Dorsolateral prefrontal cortex (tissue), 120 donors: ENCODE measurements at regions of chr14 and their contacts with region 1.

Region 1: DNA sequence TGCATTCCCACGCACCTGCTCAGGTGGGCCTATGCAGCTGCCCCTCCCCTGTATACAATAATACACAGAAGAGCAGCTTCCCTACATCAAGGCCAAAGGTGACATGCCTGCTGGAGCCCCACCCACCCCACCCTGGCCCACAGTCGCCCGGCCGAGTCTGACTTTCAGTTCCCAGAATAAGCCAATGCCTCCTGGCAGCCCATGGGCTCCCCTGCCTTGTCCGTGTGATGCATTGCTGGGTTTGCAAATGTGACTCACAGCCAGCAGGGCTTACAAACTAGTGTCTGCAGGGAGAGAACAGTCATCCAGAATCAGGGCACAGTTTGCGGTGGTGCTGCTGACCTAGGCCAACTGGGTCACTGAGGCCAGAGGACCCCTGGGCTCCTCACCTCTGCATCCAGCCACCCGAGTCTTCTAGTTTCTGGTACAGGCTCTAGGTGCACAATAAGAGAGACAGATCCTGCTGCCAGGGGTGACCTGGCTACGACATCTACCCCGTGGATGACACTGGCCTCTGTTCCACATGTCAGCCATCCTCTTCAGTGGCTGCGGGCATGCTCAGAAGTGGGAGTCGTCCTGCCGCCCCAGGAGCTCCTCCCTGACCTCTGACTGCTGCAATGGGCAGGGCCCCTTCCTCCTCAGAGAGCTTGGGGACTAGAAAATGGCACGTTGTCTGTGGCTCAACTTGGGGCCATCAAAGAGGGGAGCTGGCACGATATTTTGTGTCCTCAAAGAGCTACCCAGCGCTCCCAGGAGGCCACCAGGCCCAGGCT is 84.5 kb downstream of the CHGA start:
- DNase-seq: peak in 5 of 10 donors; percentile 54 to 78 (median 70)
- H3K4me3 ChIP-seq: no peak overlapping the region
- H3K27ac ChIP-seq: peak overlapping the region; percentile 36 to 98 (median 89)
- H3K27me3 ChIP-seq: no peaks in the 10 kb centered on the region
- CTCF ChIP-seq: no peak

Region 2: DNA sequence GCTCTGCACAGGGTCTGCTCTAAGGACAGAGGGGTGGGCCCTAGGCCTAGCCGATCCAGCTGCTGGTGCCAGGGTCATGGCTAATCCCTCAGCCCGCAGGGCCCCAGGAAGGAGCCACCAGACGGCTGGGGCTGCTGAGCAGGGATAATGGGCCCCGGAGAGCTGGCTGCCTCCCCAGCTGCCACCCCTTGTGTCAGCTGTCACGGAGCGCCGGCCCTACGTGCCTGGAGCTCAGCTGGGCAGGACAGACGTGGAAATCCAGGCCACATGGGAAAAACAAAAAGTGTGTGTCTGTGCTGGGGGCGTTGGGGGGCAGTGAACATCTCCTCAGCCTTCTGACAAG is 48.3 kb before region 1 on chr14:
- intact Hi-C with region 1: loop called (anchors 1 to 5 kb)
- DNase-seq: peak in 9 of 10 donors; percentile 64 to 83 (median 78)
- H3K4me3 ChIP-seq: peak overlapping the region in 6 of 59 donors; percentile 1 to 25 (median 4)
- H3K27ac ChIP-seq: peak overlapping the region; percentile 79 to 99 (median 95)
- H3K27me3 ChIP-seq: no peaks in the 10 kb centered on the region
- CTCF ChIP-seq: peak in 4 of 56 donors; percentile 5 to 21 (median 12)

Region 3: GRCh38 chr14:92973261-92973797 is 34.1 kb before region 1 on chr14:
- intact Hi-C with region 1: loop called (anchors 2 kb)
- DNase-seq: peak; percentile 50 to 91 (median 86)
- H3K4me3 ChIP-seq: no peak overlapping the region
- H3K27ac ChIP-seq: peak overlapping the region; percentile 24 to 92 (median 85)
- H3K27me3 ChIP-seq: no peaks in the 10 kb centered on the region
- CTCF ChIP-seq: peak; percentile 67 to 95 (median 85)

Region 4: GRCh38 chr14:93035917-93036651 is 28.7 kb after region 1 on chr14:
- intact Hi-C with region 1: loop called (anchors 1 kb)
- DNase-seq: peak in 9 of 10 donors; percentile 83 to 95 (median 93)
- H3K4me3 ChIP-seq: peak overlapping the region in 15 of 59 donors; percentile 6 to 52 (median 34)
- H3K27ac ChIP-seq: peak overlapping the region; percentile 84 to 100 (median 98)
- H3K27me3 ChIP-seq: no peaks in the 10 kb centered on the region
- CTCF ChIP-seq: peak in 5 of 56 donors; percentile 8 to 27 (median 17)

Region 5: DNA sequence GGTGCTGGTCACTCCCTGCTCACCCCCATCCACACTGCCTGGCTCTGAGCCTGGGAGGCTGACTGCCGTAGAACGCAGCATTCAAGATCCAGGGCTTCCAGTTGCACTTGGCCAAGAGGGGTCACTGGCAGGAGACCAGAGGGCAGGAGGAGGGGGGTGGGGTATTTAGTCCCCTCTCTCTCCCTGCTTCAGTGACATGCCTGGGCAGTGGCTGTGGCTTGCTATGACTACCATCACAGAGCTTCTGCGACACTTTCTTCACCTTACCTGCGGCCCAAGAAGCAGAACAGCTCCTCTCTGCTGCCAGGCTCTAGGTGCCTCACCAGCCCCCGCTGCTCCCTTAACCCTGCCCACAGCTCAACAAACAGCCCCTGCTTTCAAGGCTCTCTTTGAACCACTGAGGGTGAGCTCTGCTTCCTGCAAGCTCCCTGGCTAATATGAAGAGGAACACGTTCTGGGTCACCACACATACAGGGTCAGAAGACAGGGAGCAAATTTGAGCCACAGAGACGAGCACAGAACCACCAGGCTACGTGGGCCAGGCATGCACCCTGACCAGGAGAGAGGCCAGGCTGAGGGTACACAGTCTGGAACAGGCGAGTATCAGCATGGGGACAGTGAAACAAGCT is 52.6 kb after region 1 on chr14:
- intact Hi-C with region 1: no loop called
- DNase-seq: no peak
- H3K4me3 ChIP-seq: no peak overlapping the region
- H3K27ac ChIP-seq: peak overlapping the region in 54 of 59 donors; percentile 4 to 83 (median 66)
- H3K27me3 ChIP-seq: no peaks in the 10 kb centered on the region
- CTCF ChIP-seq: no peak

Region 6: GRCh38 chr14:93092606-93093556 is 85.5 kb after region 1 on chr14:
- intact Hi-C with region 1: no loop called
- DNase-seq: no peak
- H3K4me3 ChIP-seq: no peak overlapping the region
- H3K27ac ChIP-seq: peak overlapping the region in 58 of 59 donors; percentile 2 to 89 (median 78)
- H3K27me3 ChIP-seq: no peaks in the 10 kb centered on the region
- CTCF ChIP-seq: no peak

Region 7: DNA sequence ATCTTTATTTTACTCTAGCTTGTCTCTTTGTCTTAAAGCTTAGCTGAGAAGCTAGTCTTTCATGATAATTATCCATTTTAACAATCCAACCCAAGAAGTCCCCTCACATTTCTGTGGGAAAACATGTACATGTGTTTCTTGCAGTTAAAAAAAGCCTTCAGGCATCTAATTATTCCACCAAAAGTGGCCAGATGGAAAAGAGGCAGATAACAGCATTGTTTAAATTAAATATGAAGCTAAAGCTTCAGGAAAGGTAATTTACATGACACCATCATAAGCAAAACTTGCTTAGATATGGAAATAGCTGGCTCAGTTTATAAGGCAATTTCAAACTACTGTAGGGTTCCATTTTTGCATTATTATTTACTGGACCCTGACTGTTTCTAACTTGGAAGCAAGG is 598.7 kb after region 1 on chr14:
- intact Hi-C with region 1: no loop called
- DNase-seq: no peak
- H3K4me3 ChIP-seq: no peak overlapping the region
- H3K27ac ChIP-seq: no peak overlapping the region
- H3K27me3 ChIP-seq: no peaks in the 10 kb centered on the region
- CTCF ChIP-seq: no peak

Region 8: DNA sequence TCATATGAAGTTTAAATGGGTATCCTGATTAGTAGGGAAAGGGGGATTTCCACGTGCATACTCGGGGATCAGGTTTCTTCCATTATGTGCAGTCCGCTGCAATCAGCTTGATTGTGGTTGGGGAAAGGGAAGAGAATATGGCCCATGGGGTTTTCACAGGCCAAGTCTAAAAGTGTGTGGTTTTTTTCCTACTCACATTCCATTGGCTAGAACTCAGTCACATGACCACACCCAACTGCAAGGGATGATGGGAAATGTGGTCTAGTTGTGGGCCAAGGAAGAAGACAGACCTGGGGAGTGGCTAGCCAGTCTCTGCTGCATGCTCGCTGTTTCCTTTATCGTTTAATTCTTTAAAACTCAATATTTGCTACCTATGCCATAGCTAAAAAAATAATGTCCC is 675.8 kb after region 1 on chr14:
- intact Hi-C with region 1: no loop called
- DNase-seq: no peak
- H3K4me3 ChIP-seq: no peak overlapping the region
- H3K27ac ChIP-seq: no peak overlapping the region
- H3K27me3 ChIP-seq: no peaks in the 10 kb centered on the region
- CTCF ChIP-seq: no peak